Transverse colon (tissue), 4 donors: ENCODE measurements at regions of chr5 and their contacts with region 1.

Region 1: GRCh38 chr5:159156426-159157238 is 52.7 kb downstream of the RNF145 start:
- DNase-seq: peak; percentile 10
- H3K4me3 ChIP-seq: no peak overlapping the region
- H3K27ac ChIP-seq: peak overlapping the region in 1 of 4 donors; percentile 6
- H3K4me1 ChIP-seq: peaks cover 0 to 9% (median 3%) of the 10 kb centered on the region in 4 donors
- H3K27me3 ChIP-seq: no peaks in the 10 kb centered on the region
- CTCF ChIP-seq: peak; percentile 79 to 89 (median 86)
- EP300 ChIP-seq: no peak
- POLR2A ChIP-seq: no peak

Region 2: GRCh38 chr5:158256096-158256495 is 900.5 kb before region 1 on chr5:
- in situ Hi-C with region 1: no loop called
- intact Hi-C with region 1: no loop called
- DNase-seq: no peak
- H3K4me3 ChIP-seq: no peak overlapping the region
- H3K27ac ChIP-seq: no peak overlapping the region
- H3K4me1 ChIP-seq: no peaks in the 10 kb centered on the region
- H3K27me3 ChIP-seq: no peaks in the 10 kb centered on the region
- CTCF ChIP-seq: no peak
- EP300 ChIP-seq: no peak
- POLR2A ChIP-seq: no peak

Region 3: GRCh38 chr5:159262859-159263567 is 106.4 kb after region 1 on chr5 and contains the start of gene UBLCP1:
- in situ Hi-C with region 1: loop called in 2 of 4 experiments (anchors 10 to 25 kb)
- intact Hi-C with region 1: loop called (anchors 10 kb)
- DNase-seq: peak; percentile 85
- H3K4me3 ChIP-seq: peak within 1 kb of the TSS; percentile 77 to 97 (median 92)
- H3K27ac ChIP-seq: peak within 1 kb of the TSS; percentile 86 to 93 (median 90)
- H3K4me1 ChIP-seq: peaks cover 5 to 22% (median 12%) of the 10 kb centered on the region in 4 donors
- H3K27me3 ChIP-seq: no peaks in the 10 kb centered on the region
- CTCF ChIP-seq: no peak
- EP300 ChIP-seq: no peak
- POLR2A ChIP-seq: peak; percentile 44
- total RNA-seq, gene UBLCP1: 2.2 to 15.2 (median 8.8) TPM

Region 4: GRCh38 chr5:159316519-159317383 is 160.1 kb after region 1 on chr5:
- in situ Hi-C with region 1: loop called in 2 of 4 experiments (anchors 10 kb)
- intact Hi-C with region 1: no loop called
- DNase-seq: peak; percentile 41
- H3K4me3 ChIP-seq: no peak overlapping the region
- H3K27ac ChIP-seq: no peak overlapping the region
- H3K4me1 ChIP-seq: no peaks in the 10 kb centered on the region
- H3K27me3 ChIP-seq: peaks cover 6% of the 10 kb centered on the region
- CTCF ChIP-seq: peak; percentile 33 to 55 (median 50)
- EP300 ChIP-seq: no peak
- POLR2A ChIP-seq: no peak

Region 5: GRCh38 chr5:159469496-159470372 is 313.1 kb after region 1 on chr5:
- in situ Hi-C with region 1: no loop called
- intact Hi-C with region 1: no loop called
- DNase-seq: no peak
- H3K4me3 ChIP-seq: no peak overlapping the region
- H3K27ac ChIP-seq: no peak overlapping the region
- H3K4me1 ChIP-seq: no peaks in the 10 kb centered on the region
- H3K27me3 ChIP-seq: no peaks in the 10 kb centered on the region
- CTCF ChIP-seq: no peak
- EP300 ChIP-seq: no peak
- POLR2A ChIP-seq: no peak